GM13976 (cell line): ENCODE measurements at regions of chr9 and their contacts with region 1.

Region 1: GRCh38 chr9:134698587-134699342 is 57.2 kb downstream of the COL5A1 start:
- DNase-seq: peak; percentile 89
- CTCF ChIP-seq: peak; percentile 94

Region 2: DNA sequence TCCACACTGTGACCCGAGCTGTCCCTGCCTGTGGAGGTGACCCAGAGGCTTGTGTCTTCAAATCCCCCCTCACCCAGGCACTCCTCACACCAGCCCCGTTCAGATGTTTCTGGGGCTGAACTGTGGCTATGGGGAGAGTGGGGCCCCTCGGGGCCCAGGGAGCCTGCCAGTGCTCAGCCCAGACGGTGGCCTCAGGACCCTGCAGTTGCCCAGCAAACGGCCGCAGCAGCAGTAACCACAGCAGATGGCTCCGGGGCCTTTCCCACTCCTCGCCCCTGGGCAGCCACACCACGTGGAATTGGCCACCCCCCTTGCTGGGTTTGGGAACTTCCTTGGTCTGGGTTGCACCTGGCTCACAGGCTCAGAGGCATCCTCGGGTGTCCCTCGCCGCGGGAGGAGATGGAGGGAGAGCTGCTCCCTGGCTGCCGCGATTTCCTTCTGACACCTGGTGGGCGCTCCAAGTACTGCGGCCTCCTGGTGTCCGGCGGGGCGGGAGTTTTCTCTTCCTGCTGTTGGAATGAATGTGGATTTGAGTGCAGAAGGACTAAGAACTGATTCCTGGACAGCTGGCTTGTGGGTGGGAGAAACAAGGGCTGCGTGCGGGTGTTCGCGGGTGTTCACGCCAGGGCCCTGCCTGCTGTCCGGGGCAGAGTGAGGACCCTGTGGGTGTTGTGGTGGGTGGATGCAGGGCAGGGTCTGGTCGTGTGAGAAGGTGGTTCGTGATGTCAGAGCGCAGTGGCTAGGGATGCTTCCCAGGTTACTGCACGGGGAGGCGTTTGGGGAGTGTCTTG is 40.3 kb after region 1 on chr9:
- in situ Hi-C with region 1: no loop called
- DNase-seq: peak; percentile 70
- CTCF ChIP-seq: peak; percentile 17

Region 3: DNA sequence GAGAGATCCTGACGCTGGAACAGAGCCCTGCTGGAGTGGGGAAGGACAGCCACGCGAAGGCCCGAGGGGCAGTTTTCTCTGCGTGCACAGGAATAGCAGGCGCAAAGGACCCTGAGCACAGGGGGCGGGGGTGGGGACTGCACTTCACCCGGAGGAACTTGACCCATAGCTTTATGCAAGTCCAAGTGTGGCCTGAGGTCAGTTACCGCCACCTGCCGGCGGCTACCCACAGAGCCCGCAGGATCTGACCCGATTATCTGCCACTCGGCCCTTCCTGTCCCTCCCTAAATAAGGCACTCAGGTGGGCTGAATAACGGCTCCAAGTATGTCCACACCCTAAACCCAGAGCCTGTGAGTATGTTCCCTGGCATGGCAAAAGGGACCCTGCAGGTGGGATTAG is 284.3 kb after region 1 on chr9:
- in situ Hi-C with region 1: loop called (anchors 10 kb)
- DNase-seq: peak; percentile 69
- CTCF ChIP-seq: peak; percentile 36